Mammary epithelial cell (primary cell): ENCODE measurements at regions of chr9 and their contacts with region 1.

Region 1: GRCh38 chr9:79477955-79478771 is 93.6 kb upstream of the TLE4 start:
- DNase-seq: peak; percentile 89
- H3K4me3 ChIP-seq: no peak overlapping the region
- H3K27ac ChIP-seq: peak overlapping the region; percentile 7
- H3K4me1 ChIP-seq: peaks cover 12% of the 10 kb centered on the region
- H3K27me3 ChIP-seq: no peaks in the 10 kb centered on the region
- CTCF ChIP-seq: peak in 1 of 2 donors; percentile 13

Region 2: DNA sequence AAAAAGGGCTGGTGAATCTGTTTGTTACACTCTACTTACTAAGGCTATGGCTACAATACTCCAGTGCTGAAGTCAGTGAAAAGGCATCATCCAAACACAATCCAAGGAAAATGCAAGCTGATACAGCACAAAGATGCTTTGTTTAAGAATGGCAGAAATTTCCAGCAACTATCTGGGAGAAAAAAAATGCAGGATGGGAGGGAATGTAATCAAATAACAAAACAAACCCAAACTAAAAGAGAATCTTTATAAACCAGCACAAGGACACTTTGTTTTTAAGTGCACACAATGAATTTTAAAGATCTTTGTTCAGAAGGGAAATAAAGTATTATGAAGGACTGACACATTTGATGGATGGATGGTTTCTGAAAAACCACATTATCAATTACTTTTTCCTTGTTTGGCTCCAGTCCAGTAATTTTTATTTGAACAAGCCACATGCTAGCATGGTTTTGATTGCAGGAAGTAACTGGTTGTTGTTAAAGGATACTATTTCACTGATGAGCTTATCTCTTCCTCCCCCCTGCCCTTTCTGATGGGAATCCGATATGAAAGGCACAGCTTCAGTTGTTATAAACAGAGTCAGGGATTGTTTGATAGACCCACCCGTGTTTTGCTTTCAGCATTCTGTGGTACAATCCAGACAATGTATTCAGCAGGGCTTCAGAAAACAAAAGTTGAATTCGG is 81.5 kb after region 1 on chr9:
- CTCF ChIA-PET with region 1: no interaction called
- dilution Hi-C with region 1: loop called (anchors 5 kb)
- in situ Hi-C with region 1: no loop called
- intact Hi-C with region 1: no loop called
- DNase-seq: no peak
- H3K4me3 ChIP-seq: no peak overlapping the region
- H3K27ac ChIP-seq: no peak overlapping the region
- H3K4me1 ChIP-seq: no peaks in the 10 kb centered on the region
- H3K27me3 ChIP-seq: no peaks in the 10 kb centered on the region
- CTCF ChIP-seq: no peak

Region 3: GRCh38 chr9:80146466-80146865 is 668.3 kb after region 1 on chr9:
- CTCF ChIA-PET with region 1: no interaction called
- dilution Hi-C with region 1: no loop called
- in situ Hi-C with region 1: no loop called
- intact Hi-C with region 1: loop called (anchors 10 kb)
- DNase-seq: no peak
- H3K4me3 ChIP-seq: no peak overlapping the region
- H3K27ac ChIP-seq: no peak overlapping the region
- H3K4me1 ChIP-seq: no peaks in the 10 kb centered on the region
- H3K27me3 ChIP-seq: no peaks in the 10 kb centered on the region
- CTCF ChIP-seq: peak; percentile 8 to 11